Aorta (tissue), 5 donors: ENCODE measurements at regions of chr19 and their contacts with region 1.

Region 1: DNA sequence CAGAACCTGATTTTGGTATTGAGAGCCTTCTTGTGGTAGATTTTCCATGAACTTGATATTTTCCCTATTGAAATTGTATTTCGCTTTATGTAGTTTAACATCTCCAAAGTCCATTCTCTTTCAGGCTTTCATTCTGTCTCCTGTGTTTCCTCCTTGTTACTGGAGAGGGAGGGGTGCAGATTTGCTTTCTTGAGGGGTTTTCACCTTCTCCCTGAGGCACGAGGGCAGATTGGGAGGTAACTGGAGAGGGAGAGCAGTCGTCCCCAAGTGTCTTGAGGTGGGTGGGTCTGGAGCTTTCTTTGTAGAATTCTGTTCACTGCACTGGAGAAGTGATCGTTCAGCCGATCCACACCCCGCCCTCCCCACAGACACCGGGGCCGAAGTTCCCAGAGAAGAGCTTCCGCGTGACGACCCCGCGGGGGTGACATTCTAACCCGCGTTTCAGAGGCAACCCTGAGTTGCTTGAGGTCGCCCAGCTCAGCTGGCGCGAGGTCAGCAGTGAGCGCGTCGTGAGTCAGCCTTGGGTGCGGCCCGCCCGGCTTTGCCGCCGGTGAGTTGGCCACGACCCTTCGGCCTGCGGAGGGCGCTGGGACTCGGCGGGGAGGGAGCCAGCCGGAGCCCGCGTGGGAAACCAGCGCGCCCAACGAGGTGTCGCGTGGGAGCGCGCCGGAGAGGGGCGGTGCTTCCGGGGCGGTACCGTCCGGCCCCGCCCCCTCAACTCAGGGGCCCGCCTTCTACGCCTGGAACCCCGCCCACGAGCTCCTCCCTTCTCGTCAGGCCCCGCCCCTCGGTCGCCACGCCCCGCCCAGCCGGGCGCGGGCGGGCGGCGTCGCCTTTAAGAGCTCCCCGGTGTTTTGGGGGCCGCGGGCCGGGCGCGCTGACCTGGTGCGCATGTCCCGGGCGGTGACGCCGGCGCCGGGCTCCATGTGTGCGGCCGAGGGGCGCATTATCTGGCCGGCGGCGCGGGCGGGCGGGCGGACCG is at the start of gene GATAD2A:
- DNase-seq: peak; percentile 97 to 98
- ATAC-seq: peak; percentile 98
- H3K4me3 ChIP-seq: peak within 1 kb of the TSS; percentile 91 to 99
- H3K27ac ChIP-seq: peak within 1 kb of the TSS; percentile 49 to 96
- H3K4me1 ChIP-seq: peaks cover 1 to 11% of the 10 kb centered on the region in 2 donors
- H3K27me3 ChIP-seq: no peaks in the 10 kb centered on the region
- total RNA-seq, gene GATAD2A: 78.6 to 86.7 TPM

Region 2: GRCh38 chr19:19105365-19106055 is 299.7 kb before region 1 on chr19:
- intact Hi-C with region 1: no loop called
- DNase-seq: peak; percentile 59 to 83
- ATAC-seq: peak; percentile 66
- H3K4me3 ChIP-seq: no peak overlapping the region
- H3K27ac ChIP-seq: no peak overlapping the region
- H3K4me1 ChIP-seq: no peaks in the 10 kb centered on the region
- H3K27me3 ChIP-seq: no peaks in the 10 kb centered on the region

Region 3: DNA sequence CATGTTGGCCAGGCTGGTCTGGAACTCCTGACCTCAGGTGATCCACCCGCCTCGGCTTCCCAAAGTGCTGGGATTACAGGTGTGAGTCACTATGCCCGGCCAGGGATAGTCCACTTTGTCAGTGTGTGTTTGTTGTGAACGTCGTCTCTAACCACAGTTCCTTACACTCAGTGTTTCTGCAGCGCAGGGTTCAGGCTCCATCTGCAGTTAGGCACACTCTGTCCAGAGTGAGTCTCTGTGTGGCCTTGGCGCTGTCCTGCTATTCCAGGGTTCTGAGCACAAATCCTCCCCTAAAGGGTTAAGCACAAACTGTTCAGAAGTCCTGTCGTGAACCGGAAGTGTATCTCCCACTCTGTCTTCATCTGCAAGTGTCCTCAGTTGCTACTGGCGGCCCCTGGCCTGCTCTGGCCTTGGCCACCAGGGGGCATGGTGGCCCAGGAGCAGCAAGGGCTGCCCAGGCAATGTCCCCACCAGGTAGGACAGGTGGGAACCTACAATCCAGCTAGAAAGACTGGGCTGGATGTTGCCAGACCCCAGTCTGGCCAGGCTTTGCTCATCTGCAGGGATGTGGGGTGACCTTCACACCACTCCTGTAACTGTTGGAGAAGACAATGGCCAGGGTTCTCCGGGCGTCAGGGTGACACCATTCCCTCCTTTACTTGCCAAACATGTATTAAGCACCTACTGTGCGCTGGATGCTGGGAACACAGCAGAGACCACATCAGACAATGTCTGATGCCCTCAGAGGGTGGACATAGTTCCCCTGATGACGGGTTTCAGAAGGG is 38.4 kb before region 1 on chr19:
- intact Hi-C with region 1: loop called in 1 of 2 experiments (anchors 5 kb)
- DNase-seq: peak; percentile 75 to 84
- ATAC-seq: peak; percentile 83
- H3K4me3 ChIP-seq: no peak overlapping the region
- H3K27ac ChIP-seq: no peak overlapping the region
- H3K4me1 ChIP-seq: no peaks in the 10 kb centered on the region
- H3K27me3 ChIP-seq: no peaks in the 10 kb centered on the region

Region 4: GRCh38 chr19:19385108-19385899 is 19.9 kb before region 1 on chr19:
- intact Hi-C with region 1: loop called (anchors 1 to 2 kb)
- DNase-seq: peak; percentile 100
- ATAC-seq: peak; percentile 98
- H3K4me3 ChIP-seq: peak overlapping the region; percentile 65 to 86
- H3K27ac ChIP-seq: peak overlapping the region in 1 of 2 donors; percentile 41
- H3K4me1 ChIP-seq: no peaks in the 10 kb centered on the region
- H3K27me3 ChIP-seq: no peaks in the 10 kb centered on the region